CD8-positive, alpha-beta T cell (primary cell): ENCODE measurements at regions of chr16 and their contacts with region 1.

Region 1: GRCh38 chr16:87844120-87844733 is 25.1 kb downstream of the SLC7A5 start:
- DNase-seq: no peak
- ATAC-seq: no peak
- H3K4me3 ChIP-seq: no peak overlapping the region
- H3K4me3 Mint-ChIP-seq: no peak overlapping the region
- H3K27ac ChIP-seq: no peak overlapping the region
- H3K27ac Mint-ChIP-seq: no peak overlapping the region
- H3K4me1 ChIP-seq: peaks cover 15% of the 10 kb centered on the region
- H3K4me1 Mint-ChIP-seq: peaks cover 16% of the 10 kb centered on the region
- H3K27me3 ChIP-seq: no peaks in the 10 kb centered on the region
- H3K27me3 Mint-ChIP-seq: no peaks in the 10 kb centered on the region
- CTCF ChIP-seq: no peak

Region 2: GRCh38 chr16:87681981-87682570 is 162.2 kb before region 1 on chr16:
- CTCF ChIA-PET with region 1: no interaction called
- POLR2A ChIA-PET with region 1: no interaction called
- intact Hi-C with region 1: no loop called
- DNase-seq: no peak
- ATAC-seq: peak; percentile 29
- H3K4me3 ChIP-seq: no peak overlapping the region
- H3K4me3 Mint-ChIP-seq: no peak overlapping the region
- H3K27ac ChIP-seq: no peak overlapping the region
- H3K27ac Mint-ChIP-seq: no peak overlapping the region
- H3K4me1 ChIP-seq: no peaks in the 10 kb centered on the region
- H3K4me1 Mint-ChIP-seq: peaks cover 3% of the 10 kb centered on the region
- H3K27me3 ChIP-seq: no peaks in the 10 kb centered on the region
- H3K27me3 Mint-ChIP-seq: peaks cover 2% of the 10 kb centered on the region
- CTCF ChIP-seq: no peak

Region 3: GRCh38 chr16:87744750-87745514 is 99.3 kb before region 1 on chr16:
- CTCF ChIA-PET with region 1: no interaction called
- POLR2A ChIA-PET with region 1: no interaction called
- intact Hi-C with region 1: no loop called
- DNase-seq: no peak
- ATAC-seq: no peak
- H3K4me3 ChIP-seq: no peak overlapping the region
- H3K4me3 Mint-ChIP-seq: no peak overlapping the region
- H3K27ac ChIP-seq: no peak overlapping the region
- H3K27ac Mint-ChIP-seq: no peak overlapping the region
- H3K4me1 ChIP-seq: no peaks in the 10 kb centered on the region
- H3K4me1 Mint-ChIP-seq: peaks cover 14% of the 10 kb centered on the region
- H3K27me3 ChIP-seq: no peaks in the 10 kb centered on the region
- H3K27me3 Mint-ChIP-seq: no peaks in the 10 kb centered on the region
- CTCF ChIP-seq: no peak

Region 4: GRCh38 chr16:87790278-87791032 is 53.8 kb before region 1 on chr16:
- CTCF ChIA-PET with region 1: interaction called, 11 read pairs
- POLR2A ChIA-PET with region 1: no interaction called
- intact Hi-C with region 1: loop called in 1 of 2 experiments (anchors 5 kb)
- DNase-seq: no peak
- ATAC-seq: no peak
- H3K4me3 ChIP-seq: no peak overlapping the region
- H3K4me3 Mint-ChIP-seq: no peak overlapping the region
- H3K27ac ChIP-seq: no peak overlapping the region
- H3K27ac Mint-ChIP-seq: no peak overlapping the region
- H3K4me1 ChIP-seq: no peaks in the 10 kb centered on the region
- H3K4me1 Mint-ChIP-seq: no peaks in the 10 kb centered on the region
- H3K27me3 ChIP-seq: no peaks in the 10 kb centered on the region
- H3K27me3 Mint-ChIP-seq: no peaks in the 10 kb centered on the region
- CTCF ChIP-seq: no peak